Sciatic nerve (tissue), 2 donors: ENCODE measurements at regions of chr1 and their contacts with region 1.

Region 1: DNA sequence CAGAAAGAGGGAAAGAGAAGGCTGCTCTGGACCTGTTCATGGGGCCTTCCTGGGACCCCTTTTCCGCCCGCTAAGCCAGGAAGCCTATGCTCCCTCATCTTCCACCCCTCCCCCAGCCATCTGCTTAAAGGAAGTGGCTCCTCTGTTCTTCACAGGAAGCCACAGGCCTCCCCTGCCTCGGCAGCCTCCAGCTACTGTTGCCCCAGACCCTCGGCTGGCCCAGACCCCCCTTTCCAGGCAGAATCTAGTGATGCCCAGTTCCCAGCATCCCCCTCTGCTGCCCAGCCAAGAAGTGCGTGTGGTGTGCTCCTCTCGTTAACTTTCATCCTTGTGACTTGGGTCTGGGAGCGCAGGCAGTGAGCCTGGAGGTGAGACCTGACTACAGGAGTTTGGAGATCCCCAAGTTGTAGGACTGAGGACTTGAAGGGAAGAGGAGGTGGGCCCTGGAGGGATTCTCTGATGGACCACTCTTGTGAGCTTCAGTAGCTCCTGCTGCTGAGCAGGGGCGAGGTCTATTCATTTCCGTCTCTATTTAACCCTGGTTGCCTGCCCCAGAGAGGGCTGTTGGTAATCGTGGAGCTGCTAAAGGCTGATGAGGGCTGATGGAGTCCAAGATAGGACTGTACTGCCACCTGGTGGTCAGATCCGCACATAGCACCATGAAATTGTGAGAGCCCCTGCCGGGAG is 9.1 kb downstream of the IFI6 start:
- DNase-seq: peak; percentile 92
- ATAC-seq: peak; percentile 75

Region 2: DNA sequence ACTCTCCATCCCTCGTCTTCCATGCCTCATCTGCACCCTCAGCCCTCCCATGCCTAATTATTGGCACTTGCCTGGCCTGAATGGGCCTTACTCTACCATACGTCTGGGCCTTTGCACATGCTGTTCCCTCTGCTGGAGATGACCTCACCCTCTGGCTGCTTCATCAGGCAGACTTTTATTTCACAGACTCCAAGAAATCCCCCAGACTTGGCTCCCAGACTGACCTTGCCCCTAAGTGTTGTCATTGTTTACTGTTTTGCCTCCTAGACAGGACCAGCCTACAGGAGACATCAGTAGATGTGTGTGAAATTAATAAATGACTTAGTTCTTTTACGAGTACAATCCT is 53.7 kb before region 1 on chr1:
- intact Hi-C with region 1: loop called (anchors 2 kb)
- DNase-seq: no peak
- ATAC-seq: no peak